CD8-positive, alpha-beta T cell (primary cell): ENCODE measurements at regions of chr2 and their contacts with region 1.

Region 1: DNA sequence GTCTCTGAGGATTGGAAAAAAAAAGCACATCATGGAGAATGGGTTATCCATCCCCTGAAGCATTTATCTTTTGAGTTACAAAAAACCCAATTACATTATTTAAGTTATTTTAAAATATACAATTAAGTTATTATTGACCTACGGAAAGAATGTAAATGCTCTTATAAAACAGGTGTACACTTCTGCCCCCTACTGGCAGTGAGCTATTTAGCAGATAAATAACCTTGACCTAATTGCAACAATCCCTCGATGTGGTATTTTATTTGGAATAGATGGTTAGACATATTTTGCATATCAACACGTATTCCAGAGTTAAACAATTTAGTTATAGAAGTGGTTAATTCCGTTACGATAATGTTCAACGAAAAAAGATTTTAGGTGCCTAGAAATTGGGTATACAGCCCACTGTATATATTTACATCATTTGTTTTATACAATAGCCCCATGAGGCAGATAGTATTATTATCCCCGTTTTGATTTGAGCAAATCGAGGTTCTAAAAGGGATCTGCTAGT is 9.1 kb upstream of the DAW1 start:
- DNase-seq: peak in 3 of 9 experiments; percentile 7 to 47 (median 44)
- ATAC-seq: no peak
- H3K4me3 ChIP-seq: no peak overlapping the region
- H3K4me3 Mint-ChIP-seq: no peak overlapping the region
- H3K27ac ChIP-seq: no peak overlapping the region
- H3K27ac Mint-ChIP-seq: no peak overlapping the region
- H3K4me1 ChIP-seq: no peaks in the 10 kb centered on the region
- H3K4me1 Mint-ChIP-seq: no peaks in the 10 kb centered on the region
- H3K27me3 ChIP-seq: no peaks in the 10 kb centered on the region
- H3K27me3 Mint-ChIP-seq: no peaks in the 10 kb centered on the region
- CTCF ChIP-seq: peak; percentile 31

Region 2: DNA sequence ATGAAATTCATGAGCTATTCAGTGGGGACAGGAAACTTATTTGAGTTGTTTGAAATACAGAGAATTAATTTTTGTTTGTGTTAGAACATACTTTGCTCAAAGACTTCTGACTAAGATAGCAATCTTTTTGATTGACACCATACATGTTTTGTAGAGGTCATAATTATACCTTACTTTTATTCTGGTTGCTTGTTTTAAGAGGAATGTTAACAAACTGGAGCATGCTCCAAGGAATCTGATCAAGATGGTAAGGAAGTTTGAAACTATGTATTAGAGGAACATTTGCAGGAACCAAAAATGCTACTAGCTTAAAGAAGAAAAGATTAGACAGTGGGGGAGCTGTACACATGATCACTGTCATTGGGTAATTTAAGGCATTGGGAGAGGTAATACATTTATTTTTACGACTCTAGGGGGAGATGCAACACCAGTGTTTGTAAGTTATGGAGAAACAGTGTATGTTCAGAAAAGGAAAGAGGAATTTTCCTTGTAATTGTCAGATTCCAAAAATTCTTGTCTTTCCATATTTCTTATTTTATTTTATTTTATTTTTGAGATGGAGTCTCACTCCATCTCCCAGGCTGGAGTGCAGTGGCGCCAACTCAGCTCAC is 382.3 kb before region 1 on chr2:
- CTCF ChIA-PET with region 1: no interaction called
- POLR2A ChIA-PET with region 1: no interaction called
- intact Hi-C with region 1: loop called in 1 of 2 experiments (anchors 2 kb)
- DNase-seq: peak in 2 of 9 experiments; percentile 30 to 53
- ATAC-seq: peak; percentile 74
- H3K4me3 ChIP-seq: no peak overlapping the region
- H3K4me3 Mint-ChIP-seq: peak overlapping the region; percentile 3
- H3K27ac ChIP-seq: no peak overlapping the region
- H3K27ac Mint-ChIP-seq: peak overlapping the region; percentile 2
- H3K4me1 ChIP-seq: peaks cover 49% of the 10 kb centered on the region
- H3K4me1 Mint-ChIP-seq: peaks cover 71% of the 10 kb centered on the region
- H3K27me3 ChIP-seq: no peaks in the 10 kb centered on the region
- H3K27me3 Mint-ChIP-seq: no peaks in the 10 kb centered on the region
- CTCF ChIP-seq: no peak

Region 3: DNA sequence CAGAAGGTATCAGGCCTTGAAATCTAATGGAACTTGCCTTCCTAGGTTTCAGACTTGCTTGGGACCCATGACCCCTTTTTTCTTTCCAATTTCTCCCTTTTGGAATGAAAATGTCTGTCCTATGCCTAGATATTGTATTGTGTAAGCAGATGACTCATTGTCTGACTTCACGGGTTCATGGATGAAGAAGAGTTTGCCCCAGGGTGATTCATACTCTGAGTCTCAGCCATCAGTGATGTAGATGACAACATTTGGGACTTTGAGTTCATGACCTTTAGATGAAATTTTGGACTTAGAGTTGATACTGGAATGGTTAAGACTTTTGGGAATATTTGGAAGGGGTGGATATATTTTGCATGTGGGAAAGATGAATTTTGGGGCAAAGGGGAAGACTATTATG is 206.8 kb before region 1 on chr2:
- CTCF ChIA-PET with region 1: interaction called, 7 read pairs
- POLR2A ChIA-PET with region 1: no interaction called
- intact Hi-C with region 1: loop called (anchors 5 to 10 kb)
- DNase-seq: peak in 1 of 9 experiments; percentile 2
- ATAC-seq: no peak
- H3K4me3 ChIP-seq: no peak overlapping the region
- H3K4me3 Mint-ChIP-seq: no peak overlapping the region
- H3K27ac ChIP-seq: no peak overlapping the region
- H3K27ac Mint-ChIP-seq: no peak overlapping the region
- H3K4me1 ChIP-seq: no peaks in the 10 kb centered on the region
- H3K4me1 Mint-ChIP-seq: no peaks in the 10 kb centered on the region
- H3K27me3 ChIP-seq: no peaks in the 10 kb centered on the region
- H3K27me3 Mint-ChIP-seq: no peaks in the 10 kb centered on the region
- CTCF ChIP-seq: no peak

Region 4: GRCh38 chr2:227661019-227661649 is 201.2 kb before region 1 on chr2:
- CTCF ChIA-PET with region 1: interaction called, 7 read pairs
- POLR2A ChIA-PET with region 1: no interaction called
- intact Hi-C with region 1: loop called (anchors 5 to 10 kb)
- DNase-seq: no peak
- ATAC-seq: no peak
- H3K4me3 ChIP-seq: no peak overlapping the region
- H3K4me3 Mint-ChIP-seq: no peak overlapping the region
- H3K27ac ChIP-seq: no peak overlapping the region
- H3K27ac Mint-ChIP-seq: no peak overlapping the region
- H3K4me1 ChIP-seq: no peaks in the 10 kb centered on the region
- H3K4me1 Mint-ChIP-seq: no peaks in the 10 kb centered on the region
- H3K27me3 ChIP-seq: peaks cover 0 to 3% of the 10 kb centered on the region in 2 experiments
- H3K27me3 Mint-ChIP-seq: no peaks in the 10 kb centered on the region
- CTCF ChIP-seq: no peak

Region 5: DNA sequence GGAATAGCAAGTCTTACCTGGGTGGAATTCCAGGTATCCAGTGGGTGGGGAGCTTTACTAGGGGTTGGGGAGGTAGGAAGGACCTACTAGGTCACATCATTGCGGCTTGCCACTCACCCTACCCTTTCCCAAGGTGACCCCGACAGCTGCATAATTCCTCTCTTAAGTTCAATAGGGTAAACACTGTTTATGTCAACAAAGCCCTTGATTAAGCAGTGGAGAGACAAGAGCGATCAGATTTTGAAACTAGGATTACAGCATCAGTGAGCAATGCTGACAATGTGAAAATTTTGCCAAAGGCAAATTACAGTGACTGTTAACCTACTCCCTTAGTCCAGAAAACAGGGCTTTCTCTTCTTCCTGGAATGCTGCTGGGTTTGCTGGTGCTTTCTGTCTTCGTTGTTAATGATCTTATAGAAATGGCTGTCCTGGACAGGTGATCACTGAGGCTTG is 159.0 kb before region 1 on chr2:
- CTCF ChIA-PET with region 1: no interaction called
- POLR2A ChIA-PET with region 1: no interaction called
- intact Hi-C with region 1: no loop called
- DNase-seq: no peak
- ATAC-seq: no peak
- H3K4me3 ChIP-seq: no peak overlapping the region
- H3K4me3 Mint-ChIP-seq: no peak overlapping the region
- H3K27ac ChIP-seq: no peak overlapping the region
- H3K27ac Mint-ChIP-seq: no peak overlapping the region
- H3K4me1 ChIP-seq: no peaks in the 10 kb centered on the region
- H3K4me1 Mint-ChIP-seq: no peaks in the 10 kb centered on the region
- H3K27me3 ChIP-seq: no peaks in the 10 kb centered on the region
- H3K27me3 Mint-ChIP-seq: peaks cover 16% of the 10 kb centered on the region
- CTCF ChIP-seq: no peak

Region 6: GRCh38 chr2:227774011-227774624 is 88.2 kb before region 1 on chr2:
- CTCF ChIA-PET with region 1: interaction called, 4 read pairs
- POLR2A ChIA-PET with region 1: interaction called, 3 read pairs
- intact Hi-C with region 1: loop called in 1 of 2 experiments (anchors 5 kb)
- DNase-seq: peak in 1 of 9 experiments; percentile 11
- ATAC-seq: no peak
- H3K4me3 ChIP-seq: no peak overlapping the region
- H3K4me3 Mint-ChIP-seq: no peak overlapping the region
- H3K27ac ChIP-seq: no peak overlapping the region
- H3K27ac Mint-ChIP-seq: no peak overlapping the region
- H3K4me1 ChIP-seq: no peaks in the 10 kb centered on the region
- H3K4me1 Mint-ChIP-seq: no peaks in the 10 kb centered on the region
- H3K27me3 ChIP-seq: no peaks in the 10 kb centered on the region
- H3K27me3 Mint-ChIP-seq: peaks cover 2% of the 10 kb centered on the region
- CTCF ChIP-seq: no peak

Region 7: GRCh38 chr2:227813562-227814353 is 48.5 kb before region 1 on chr2 and contains the start of gene CCL20:
- CTCF ChIA-PET with region 1: no interaction called
- POLR2A ChIA-PET with region 1: no interaction called
- intact Hi-C with region 1: no loop called
- DNase-seq: peak in 2 of 9 experiments; percentile 21 to 28
- ATAC-seq: no peak
- H3K4me3 ChIP-seq: no peak within 1 kb of the TSS
- H3K4me3 Mint-ChIP-seq: no peak within 1 kb of the TSS
- H3K27ac ChIP-seq: no peak within 1 kb of the TSS
- H3K27ac Mint-ChIP-seq: peak within 1 kb of the TSS; percentile 34
- H3K4me1 ChIP-seq: no peaks in the 10 kb centered on the region
- H3K4me1 Mint-ChIP-seq: no peaks in the 10 kb centered on the region
- H3K27me3 ChIP-seq: peaks cover 0 to 2% of the 10 kb centered on the region in 2 experiments
- H3K27me3 Mint-ChIP-seq: peaks cover 4% of the 10 kb centered on the region
- CTCF ChIP-seq: no peak
- total RNA-seq, gene CCL20: 2.3 to 2.4 TPM

Region 8: GRCh38 chr2:227960317-227960716 is 98.0 kb after region 1 on chr2:
- CTCF ChIA-PET with region 1: no interaction called
- POLR2A ChIA-PET with region 1: no interaction called
- intact Hi-C with region 1: no loop called
- DNase-seq: no peak
- ATAC-seq: no peak
- H3K4me3 ChIP-seq: no peak overlapping the region
- H3K4me3 Mint-ChIP-seq: no peak overlapping the region
- H3K27ac ChIP-seq: no peak overlapping the region
- H3K27ac Mint-ChIP-seq: no peak overlapping the region
- H3K4me1 ChIP-seq: no peaks in the 10 kb centered on the region
- H3K4me1 Mint-ChIP-seq: no peaks in the 10 kb centered on the region
- H3K27me3 ChIP-seq: no peaks in the 10 kb centered on the region
- H3K27me3 Mint-ChIP-seq: no peaks in the 10 kb centered on the region
- CTCF ChIP-seq: no peak